ENCODE measurements at regions of chr10 and their contacts with region 1.

Region 1: DNA sequence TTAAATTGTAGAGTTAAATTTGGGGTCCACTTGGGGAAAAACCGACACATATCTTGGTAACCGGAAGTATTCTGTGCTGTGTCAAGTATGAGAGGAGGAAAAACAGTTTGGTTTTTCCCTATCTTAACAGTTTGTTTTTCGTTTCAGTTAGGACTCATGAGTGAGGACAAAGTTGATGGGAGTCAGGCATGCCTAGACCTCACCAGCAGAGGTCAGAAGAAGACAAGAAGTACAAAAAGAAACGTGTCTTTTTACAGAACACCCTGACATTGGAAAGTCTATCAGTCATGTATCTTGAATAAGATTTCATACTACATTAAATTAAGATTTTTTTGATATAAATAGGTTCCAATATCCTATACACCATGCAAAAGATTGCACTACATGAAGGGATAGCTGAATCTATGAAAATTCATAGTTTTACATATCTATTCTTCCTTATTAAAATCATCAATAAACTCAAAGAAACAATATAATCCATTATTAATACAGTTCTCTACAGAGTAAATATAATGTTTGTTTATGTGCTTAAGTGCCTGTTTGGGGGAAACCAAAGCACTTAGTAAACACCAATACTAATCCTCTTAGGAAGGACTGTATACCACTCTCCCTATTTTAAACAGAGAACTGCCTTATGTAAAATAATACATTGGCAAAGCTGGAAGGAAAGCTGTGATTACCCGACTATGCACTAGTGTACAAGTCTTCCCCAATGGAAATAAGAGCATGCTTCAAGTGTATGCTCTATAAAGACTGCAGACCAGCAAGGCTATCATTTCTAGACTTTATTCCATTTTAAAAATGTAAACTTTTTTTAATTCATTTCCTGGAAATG is 95.6 kb downstream of the USP6NL start:
- DNase-seq: peak; percentile 36
- CTCF ChIP-seq: peak; percentile 84

Region 2: GRCh38 chr10:11724938-11725776 is 209.3 kb after region 1 on chr10:
- in situ Hi-C with region 1: loop called (anchors 5 kb)
- DNase-seq: peak; percentile 83
- CTCF ChIP-seq: peak; percentile 81

Measured in GM13977 (cell line).